ENCODE measurements at regions of chrX and their contacts with region 1.

Region 1: DNA sequence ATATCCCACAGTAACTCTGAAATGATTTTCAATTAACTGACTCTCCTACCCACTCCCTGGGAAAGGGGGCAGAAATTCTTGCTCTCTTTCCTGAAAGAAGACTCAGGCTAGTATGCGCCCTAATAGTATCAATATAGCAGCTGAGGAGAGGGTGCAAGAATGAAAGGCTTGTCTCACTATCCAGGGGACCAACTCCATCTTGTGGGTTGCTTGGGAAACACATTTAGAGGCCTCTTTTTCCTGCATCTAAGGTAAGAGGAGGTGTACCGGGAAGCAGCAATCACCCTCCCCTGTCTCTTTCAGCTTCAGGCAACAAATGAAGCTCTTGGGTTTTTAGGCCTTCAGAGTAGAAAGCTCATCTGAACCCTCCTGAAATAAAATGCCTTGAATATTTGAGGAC is 11.3 kb downstream of the TMEM255A start:
- DNase-seq: no peak

Region 2: DNA sequence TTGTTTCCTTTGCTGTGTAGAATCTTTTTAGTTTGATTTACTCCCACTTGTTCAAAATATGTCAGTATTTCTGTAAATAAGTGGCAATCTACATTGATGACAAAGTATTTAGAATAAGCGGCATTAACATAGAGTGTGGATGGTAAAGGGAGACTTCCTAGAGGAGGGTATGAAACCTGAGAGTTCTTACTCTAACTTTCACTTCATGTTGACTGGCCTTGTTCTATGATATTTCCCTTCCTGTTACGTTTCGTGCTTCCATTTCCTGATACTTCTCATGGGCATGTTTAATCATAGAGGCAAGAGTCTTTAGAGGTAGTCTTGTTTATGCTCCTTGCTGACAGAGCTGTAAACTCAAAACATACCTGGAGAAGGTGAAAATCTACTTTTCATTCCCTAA is 1156.4 kb after region 1 on chrX:
- intact Hi-C with region 1: loop called in 1 of 2 experiments (anchors 10 kb)
- DNase-seq: no peak

Measured in posterior vena cava (tissue), 2 donors.